Panc1 (cell line): ENCODE measurements at regions of chr21 and their contacts with region 1.

Region 1: DNA sequence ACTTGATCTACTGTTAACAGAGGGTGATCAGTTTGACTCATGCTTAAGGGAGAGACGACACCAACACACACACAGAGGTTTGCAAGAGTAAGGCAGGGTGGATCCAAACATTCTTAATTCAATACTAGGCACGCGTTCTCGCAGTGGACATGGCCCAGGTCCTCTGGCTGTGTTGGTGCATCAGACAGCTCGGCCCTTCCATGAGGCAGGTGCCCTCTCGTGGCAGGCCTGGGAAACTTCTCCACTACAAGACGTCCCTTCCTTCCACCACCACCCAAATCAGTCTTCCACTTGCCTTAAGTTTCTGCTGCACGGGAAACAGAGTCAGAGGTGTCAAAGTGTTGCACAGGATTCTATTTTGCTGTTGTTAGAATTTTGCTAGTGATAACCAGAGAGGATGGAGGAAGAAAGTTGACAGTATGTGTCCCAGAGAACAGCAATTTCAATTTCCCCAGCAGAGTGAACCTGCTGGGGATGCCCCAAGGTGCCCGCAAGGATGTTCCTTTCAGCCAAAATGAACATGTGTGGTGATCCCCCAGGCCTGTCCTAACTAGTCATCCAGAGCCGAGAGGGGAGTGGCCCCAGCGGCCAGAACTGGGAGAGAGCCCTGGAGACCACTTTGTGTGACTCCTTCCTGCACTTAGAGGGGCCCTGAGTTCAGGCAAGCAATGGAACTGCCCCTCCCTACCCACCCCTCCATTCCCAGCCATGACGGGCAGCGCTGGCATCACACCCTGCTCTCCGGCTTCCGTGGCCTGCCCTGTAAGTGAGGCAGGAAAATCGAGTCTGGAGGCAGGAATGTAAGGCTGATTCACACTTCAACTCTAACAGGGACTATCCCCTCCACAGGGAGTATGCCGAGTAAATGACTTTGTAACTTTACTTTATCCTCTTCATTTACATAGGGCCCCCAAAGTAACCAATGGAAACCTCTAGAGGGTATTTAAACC is 34.8 kb downstream of the MX1 start:
- DNase-seq: peak; percentile 33
- ATAC-seq: peak; percentile 93
- H3K4me3 ChIP-seq: no peak overlapping the region
- H3K27ac ChIP-seq: no peak overlapping the region
- H3K4me1 ChIP-seq: no peaks in the 10 kb centered on the region; the same call in 1 of the 2 replicates
- H3K27me3 ChIP-seq: no peaks in the 10 kb centered on the region
- CTCF ChIP-seq: peak; percentile 85

Region 2: DNA sequence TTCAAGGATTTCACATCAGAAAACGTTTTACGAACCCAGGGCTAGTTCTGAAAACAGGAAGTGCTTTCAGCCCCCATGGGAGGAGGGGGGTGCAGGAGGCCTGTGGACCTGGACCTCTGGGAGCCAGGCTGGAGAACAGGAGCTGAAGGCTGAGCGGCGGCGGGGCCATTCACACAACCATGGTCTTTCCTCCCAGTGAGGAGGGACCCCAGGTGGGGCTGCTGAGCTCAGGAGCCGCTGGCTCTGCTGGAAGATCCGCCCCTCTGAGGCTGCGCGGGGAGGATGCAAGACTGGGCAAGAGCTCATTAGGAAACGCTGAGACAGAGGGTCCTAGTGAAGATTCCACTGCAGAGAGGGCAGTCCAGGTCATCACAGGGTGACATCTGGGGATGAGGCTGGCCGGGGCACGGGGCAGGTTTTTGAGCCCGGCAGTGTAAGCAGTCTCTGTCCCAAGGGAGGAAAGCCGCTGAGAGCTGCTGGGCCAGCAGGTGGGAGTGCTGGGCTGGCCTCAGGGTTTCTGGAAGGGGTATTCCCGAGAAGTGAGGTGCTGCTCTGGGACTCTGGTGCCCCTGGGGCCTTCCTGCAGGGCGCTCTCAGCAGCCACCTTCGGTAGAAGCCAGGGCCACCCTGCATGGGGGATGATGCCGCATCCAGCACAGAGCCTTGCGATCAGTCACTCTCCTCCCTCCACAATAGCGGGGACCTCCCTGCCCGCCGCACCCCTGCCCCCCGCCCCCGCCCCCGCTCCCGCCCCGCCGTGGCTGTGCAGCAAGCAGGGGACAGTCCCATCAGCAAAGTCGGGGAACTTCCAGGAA is 91.5 kb before region 1 on chr21:
- CTCF ChIA-PET with region 1: interaction called, 3 read pairs
- POLR2A ChIA-PET with region 1: no interaction called
- in situ Hi-C with region 1: no loop called
- intact Hi-C with region 1: loop called (anchors 5 kb)
- DNase-seq: no peak
- ATAC-seq: peak; percentile 68
- H3K4me3 ChIP-seq: peak overlapping the region; percentile 70 to 92
- H3K27ac ChIP-seq: peak overlapping the region; percentile 73; the same call in 1 of the 2 replicates
- H3K4me1 ChIP-seq: no peaks in the 10 kb centered on the region
- H3K27me3 ChIP-seq: no peaks in the 10 kb centered on the region
- CTCF ChIP-seq: 0 out of 2 replicates have a peak, but pooled peaks have one; percentile 35